PC-3 (cell line): ENCODE measurements at regions of chr1 and their contacts with region 1.

Region 1: DNA sequence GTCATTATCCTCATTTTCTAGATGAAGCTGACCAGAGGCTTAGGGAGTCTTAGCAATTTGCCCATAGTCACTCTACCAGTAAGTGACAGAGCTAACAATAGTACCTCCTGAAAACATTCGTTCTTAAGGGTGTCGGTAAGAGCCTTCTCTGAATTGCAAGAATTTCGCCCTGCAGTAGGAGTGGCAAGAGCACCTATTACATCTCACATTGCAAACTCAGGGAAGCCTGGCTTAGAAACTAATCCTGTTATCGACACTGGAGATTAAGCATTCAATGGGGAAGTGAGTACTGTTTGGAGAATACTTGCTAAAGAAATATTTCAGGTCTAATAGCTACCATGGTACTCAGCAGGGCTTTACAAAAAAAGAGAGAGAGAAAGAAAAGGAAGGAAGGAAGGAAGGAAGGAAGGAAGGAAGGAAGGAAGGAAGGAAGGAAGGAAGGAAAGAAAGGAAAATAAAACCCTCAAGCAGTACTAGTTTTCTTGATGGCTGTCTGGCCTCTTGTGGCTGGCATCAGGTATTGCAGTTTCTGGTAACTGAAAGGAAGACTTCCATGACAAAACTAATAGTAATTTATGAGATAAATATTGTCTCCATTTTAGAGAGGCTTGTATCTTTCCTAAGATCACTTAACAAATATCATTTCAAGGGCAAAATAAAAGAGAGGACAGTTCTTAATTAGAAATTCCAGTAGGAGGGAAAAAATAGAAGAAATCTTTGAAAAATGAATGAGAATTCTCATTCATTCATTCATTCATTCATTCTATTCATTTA is 10.4 kb downstream of the C1orf226 start:
- DNase-seq: peak; percentile 71
- ATAC-seq: peak; percentile 57
- H3K4me3 ChIP-seq: no peak overlapping the region
- H3K27ac ChIP-seq: no peak overlapping the region
- H3K4me1 ChIP-seq: peaks cover 11% of the 10 kb centered on the region
- H3K27me3 ChIP-seq: no peaks in the 10 kb centered on the region
- CTCF ChIP-seq: peak; percentile 91

Region 2: GRCh38 chr1:162056043-162056442 is 335.9 kb before region 1 on chr1:
- CTCF ChIA-PET with region 1: interaction called, 9 read pairs
- POLR2A ChIA-PET with region 1: no interaction called
- intact Hi-C with region 1: loop called (anchors 1 kb)
- DNase-seq: peak; percentile 89
- ATAC-seq: peak; percentile 68
- H3K4me3 ChIP-seq: no peak overlapping the region
- H3K27ac ChIP-seq: no peak overlapping the region
- H3K4me1 ChIP-seq: peaks cover 16% of the 10 kb centered on the region
- H3K27me3 ChIP-seq: no peaks in the 10 kb centered on the region
- CTCF ChIP-seq: peak; percentile 98

Region 3: GRCh38 chr1:162285149-162285561 is 106.8 kb before region 1 on chr1:
- CTCF ChIA-PET with region 1: no interaction called
- POLR2A ChIA-PET with region 1: no interaction called
- intact Hi-C with region 1: loop called (anchors 2 kb)
- DNase-seq: peak; percentile 96
- ATAC-seq: peak; percentile 94
- H3K4me3 ChIP-seq: 0 out of 2 replicates have a peak overlapping the region, but pooled peaks have one; percentile 20
- H3K27ac ChIP-seq: 0 out of 2 replicates have a peak overlapping the region, but pooled peaks have one; percentile 3
- H3K4me1 ChIP-seq: peaks cover 20% of the 10 kb centered on the region
- H3K27me3 ChIP-seq: no peaks in the 10 kb centered on the region
- CTCF ChIP-seq: no peak; the same call in 1 of the 2 replicates

Region 4: DNA sequence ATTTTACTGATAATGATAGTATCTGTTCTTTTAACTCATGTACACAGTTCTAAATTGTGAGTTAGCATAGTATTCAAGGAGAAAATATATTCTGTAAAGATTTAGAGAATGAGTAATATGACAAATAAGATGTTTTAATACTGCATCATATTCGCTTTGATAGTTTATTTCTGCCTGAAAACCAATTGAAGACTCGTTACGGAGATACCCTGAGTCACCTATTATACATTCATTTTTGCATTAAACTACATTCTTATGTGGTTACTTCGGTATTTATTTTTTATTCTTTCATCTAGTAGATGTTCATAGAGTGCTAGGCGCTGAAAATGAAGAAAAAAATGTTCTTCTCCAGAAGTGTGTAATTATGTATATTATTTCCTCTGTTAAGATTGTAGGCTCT is 111.0 kb after region 1 on chr1:
- CTCF ChIA-PET with region 1: interaction called, 20 read pairs
- POLR2A ChIA-PET with region 1: interaction called, 4 read pairs
- intact Hi-C with region 1: no loop called
- DNase-seq: peak; percentile 81
- ATAC-seq: peak; percentile 75
- H3K4me3 ChIP-seq: peak overlapping the region; percentile 33; the same call in 1 of the 2 replicates
- H3K27ac ChIP-seq: peak overlapping the region; percentile 46
- H3K4me1 ChIP-seq: peaks cover 41% of the 10 kb centered on the region
- H3K27me3 ChIP-seq: no peaks in the 10 kb centered on the region
- CTCF ChIP-seq: no peak